ENCODE measurements at regions of chr12 and their contacts with region 1.

Region 1: GRCh38 chr12:113358381-113359132 is at the start of gene PLBD2:
- DNase-seq: peak; percentile 90
- ATAC-seq: peak; percentile 97
- H3K4me3 Mint-ChIP-seq: peak within 1 kb of the TSS; percentile 91
- H3K27ac Mint-ChIP-seq: peak within 1 kb of the TSS; percentile 88
- H3K4me1 Mint-ChIP-seq: peaks cover 11% of the 10 kb centered on the region
- H3K27me3 Mint-ChIP-seq: no peaks in the 10 kb centered on the region
- CTCF ChIP-seq: no peak
- total RNA-seq, gene PLBD2: 11.5 and 13.7 TPM in 2 replicates

Region 2: GRCh38 chr12:113184900-113185773 is 173.4 kb before region 1 on chr12 and contains the starts of genes DDX54 and RITA1:
- CTCF ChIA-PET with region 1: no interaction called
- POLR2A ChIA-PET with region 1: no interaction called
- intact Hi-C with region 1: loop called (anchors 1 kb)
- DNase-seq: peak; percentile 87
- ATAC-seq: peak; percentile 83
- H3K4me3 Mint-ChIP-seq: peak within 1 kb of the TSS; percentile 93
- H3K27ac Mint-ChIP-seq: peak within 1 kb of the TSS; percentile 94
- H3K4me1 Mint-ChIP-seq: peaks cover 39% of the 10 kb centered on the region
- H3K27me3 Mint-ChIP-seq: no peaks in the 10 kb centered on the region
- CTCF ChIP-seq: no peak
- total RNA-seq, gene DDX54: 115 TPM in 2 replicates
- total RNA-seq, gene RITA1: 15.5 and 18.2 TPM in 2 replicates

Region 3: DNA sequence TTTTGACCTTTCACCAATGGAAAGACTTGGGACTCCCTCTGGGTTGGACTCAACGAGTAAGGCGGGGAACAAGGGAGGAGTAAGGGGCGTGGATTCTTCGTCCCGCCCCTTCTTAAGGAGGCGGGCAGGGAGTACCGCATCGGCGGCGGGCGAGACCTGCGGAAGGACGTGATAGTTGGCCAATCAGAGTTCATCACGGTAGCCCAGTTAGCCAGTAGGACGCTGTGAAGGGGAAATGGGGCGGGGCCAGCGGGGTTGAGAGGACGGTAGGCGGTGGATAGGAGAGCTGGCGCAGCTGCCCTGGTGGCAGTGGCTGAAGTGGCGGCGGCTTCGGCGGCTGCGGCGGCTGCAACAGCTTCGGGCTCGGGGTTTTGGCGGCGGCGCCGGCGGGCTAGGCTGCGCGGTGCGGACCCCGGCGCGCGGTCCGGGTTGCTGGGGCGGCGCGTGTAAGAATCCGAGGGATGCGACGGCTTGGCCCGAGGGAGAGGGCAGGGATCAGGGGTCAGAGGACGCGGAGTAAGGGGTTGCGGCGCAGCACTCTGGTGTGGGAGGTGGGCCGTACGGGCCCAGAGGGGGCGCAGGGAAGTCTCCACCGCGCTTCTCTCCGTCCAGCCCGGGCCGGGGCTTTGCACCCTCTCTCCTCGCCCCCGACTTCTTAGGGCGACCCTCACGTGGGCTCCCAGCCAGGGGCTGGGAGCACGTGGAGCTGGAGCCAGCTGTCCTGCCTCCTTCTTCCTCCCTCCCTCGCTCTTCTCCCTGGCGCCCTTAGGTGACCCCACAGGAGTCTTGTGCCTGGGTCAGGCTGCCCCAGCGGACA is 137.2 kb before region 1 on chr12 and contains the start of gene TPCN1:
- CTCF ChIA-PET with region 1: no interaction called
- POLR2A ChIA-PET with region 1: no interaction called
- intact Hi-C with region 1: loop called (anchors 1 kb)
- DNase-seq: peak; percentile 95
- ATAC-seq: peak; percentile 91
- H3K4me3 Mint-ChIP-seq: peak within 1 kb of the TSS; percentile 94
- H3K27ac Mint-ChIP-seq: peak within 1 kb of the TSS; percentile 94
- H3K4me1 Mint-ChIP-seq: peaks cover 45% of the 10 kb centered on the region
- H3K27me3 Mint-ChIP-seq: no peaks in the 10 kb centered on the region
- CTCF ChIP-seq: no peak
- total RNA-seq, gene TPCN1: 107 and 126 TPM in 2 replicates

Region 4: DNA sequence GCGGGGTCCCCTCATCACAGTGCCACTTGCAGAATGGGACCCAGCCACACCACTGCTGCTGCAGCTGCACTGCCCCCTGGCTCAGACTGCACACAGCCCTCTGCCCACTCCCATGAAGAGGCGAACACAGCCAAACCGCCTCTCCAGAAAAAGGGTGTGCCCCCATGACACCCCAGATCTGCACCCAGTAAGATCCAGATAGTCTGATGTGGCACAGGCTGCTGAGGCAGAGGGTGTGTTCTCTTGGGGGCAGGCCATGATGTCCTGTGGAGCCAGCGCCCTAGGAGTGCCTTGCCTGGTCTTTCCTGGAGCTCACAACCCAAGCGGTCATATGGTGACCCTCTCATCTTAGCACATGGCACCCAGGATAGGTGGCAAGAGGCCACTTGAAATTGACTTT is 68.1 kb before region 1 on chr12:
- CTCF ChIA-PET with region 1: no interaction called
- POLR2A ChIA-PET with region 1: interaction called, 11 read pairs
- intact Hi-C with region 1: no loop called
- DNase-seq: no peak
- ATAC-seq: no peak
- H3K4me3 Mint-ChIP-seq: no peak overlapping the region
- H3K27ac Mint-ChIP-seq: no peak overlapping the region
- H3K4me1 Mint-ChIP-seq: no peaks in the 10 kb centered on the region
- H3K27me3 Mint-ChIP-seq: no peaks in the 10 kb centered on the region
- CTCF ChIP-seq: no peak

Region 5: DNA sequence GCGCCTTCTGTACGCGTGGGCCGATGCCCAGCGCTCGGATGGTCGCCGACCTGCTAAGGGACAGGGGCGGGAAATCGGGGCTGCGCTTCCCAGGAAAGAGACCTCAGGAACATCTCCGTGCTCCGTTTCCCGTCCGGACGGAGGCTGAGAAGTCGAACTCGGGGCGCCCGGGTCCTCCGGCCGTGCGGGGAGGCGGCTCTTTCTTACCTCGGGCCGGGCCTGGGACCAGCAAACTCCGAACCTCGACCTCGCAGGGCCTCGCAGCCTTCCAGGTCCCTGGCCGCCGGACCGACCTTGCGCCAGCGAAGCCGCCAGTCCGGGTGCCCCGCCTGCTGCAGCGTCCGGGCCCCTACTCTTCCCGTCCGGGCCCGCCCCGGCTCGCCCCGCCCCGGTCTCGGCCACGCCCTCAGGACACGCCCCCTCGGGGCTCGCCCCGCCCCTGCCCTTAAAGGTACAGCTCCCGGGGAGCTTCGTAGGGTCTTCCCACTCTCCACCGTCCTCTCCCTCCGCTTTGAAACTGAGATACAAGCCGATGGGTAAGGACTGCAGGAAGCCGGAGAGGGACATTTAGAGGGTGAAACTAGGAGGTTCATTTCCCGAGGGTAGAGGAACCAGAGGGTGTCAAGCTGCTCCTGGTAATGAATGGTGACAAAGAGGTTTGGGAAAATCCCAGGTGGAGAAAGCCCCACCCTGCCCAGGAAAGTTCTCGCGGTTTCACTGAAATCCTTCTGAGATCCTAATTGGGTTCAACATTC is 23.6 kb before region 1 on chr12 and contains the start of gene SLC8B1:
- CTCF ChIA-PET with region 1: no interaction called
- POLR2A ChIA-PET with region 1: interaction called, 13 read pairs
- intact Hi-C with region 1: loop called (anchors 1 kb)
- DNase-seq: peak; percentile 89
- ATAC-seq: peak; percentile 100
- H3K4me3 Mint-ChIP-seq: peak within 1 kb of the TSS; percentile 95
- H3K27ac Mint-ChIP-seq: peak within 1 kb of the TSS; percentile 71
- H3K4me1 Mint-ChIP-seq: peaks cover 35% of the 10 kb centered on the region
- H3K27me3 Mint-ChIP-seq: no peaks in the 10 kb centered on the region
- CTCF ChIP-seq: no peak
- total RNA-seq, gene SLC8B1: 14.3 and 22.4 TPM in 2 replicates

Region 6: GRCh38 chr12:113398346-113399290 is 40.1 kb after region 1 on chr12:
- CTCF ChIA-PET with region 1: no interaction called
- POLR2A ChIA-PET with region 1: no interaction called
- intact Hi-C with region 1: no loop called
- DNase-seq: no peak
- ATAC-seq: no peak
- H3K4me3 Mint-ChIP-seq: no peak overlapping the region
- H3K27ac Mint-ChIP-seq: no peak overlapping the region
- H3K4me1 Mint-ChIP-seq: no peaks in the 10 kb centered on the region
- H3K27me3 Mint-ChIP-seq: peaks cover 16% of the 10 kb centered on the region
- CTCF ChIP-seq: no peak

Region 7: GRCh38 chr12:113422030-113422885 is 63.7 kb after region 1 on chr12 and contains the start of gene SDSL:
- CTCF ChIA-PET with region 1: no interaction called
- POLR2A ChIA-PET with region 1: no interaction called
- intact Hi-C with region 1: loop called (anchors 2 kb)
- DNase-seq: peak; percentile 41
- ATAC-seq: peak; percentile 92
- H3K4me3 Mint-ChIP-seq: peak within 1 kb of the TSS; percentile 67
- H3K27ac Mint-ChIP-seq: peak within 1 kb of the TSS; percentile 68
- H3K4me1 Mint-ChIP-seq: peaks cover 25% of the 10 kb centered on the region
- H3K27me3 Mint-ChIP-seq: peaks cover 14% of the 10 kb centered on the region
- CTCF ChIP-seq: no peak
- total RNA-seq, gene SDSL: 0.20 and 1.2 TPM in 2 replicates

Region 8: GRCh38 chr12:113515082-113515856 is 156.7 kb after region 1 on chr12:
- CTCF ChIA-PET with region 1: no interaction called
- POLR2A ChIA-PET with region 1: no interaction called
- intact Hi-C with region 1: no loop called
- DNase-seq: no peak
- ATAC-seq: no peak
- H3K4me3 Mint-ChIP-seq: no peak overlapping the region
- H3K27ac Mint-ChIP-seq: no peak overlapping the region
- H3K4me1 Mint-ChIP-seq: no peaks in the 10 kb centered on the region
- H3K27me3 Mint-ChIP-seq: peaks cover 58% of the 10 kb centered on the region
- CTCF ChIP-seq: no peak

Region 9: DNA sequence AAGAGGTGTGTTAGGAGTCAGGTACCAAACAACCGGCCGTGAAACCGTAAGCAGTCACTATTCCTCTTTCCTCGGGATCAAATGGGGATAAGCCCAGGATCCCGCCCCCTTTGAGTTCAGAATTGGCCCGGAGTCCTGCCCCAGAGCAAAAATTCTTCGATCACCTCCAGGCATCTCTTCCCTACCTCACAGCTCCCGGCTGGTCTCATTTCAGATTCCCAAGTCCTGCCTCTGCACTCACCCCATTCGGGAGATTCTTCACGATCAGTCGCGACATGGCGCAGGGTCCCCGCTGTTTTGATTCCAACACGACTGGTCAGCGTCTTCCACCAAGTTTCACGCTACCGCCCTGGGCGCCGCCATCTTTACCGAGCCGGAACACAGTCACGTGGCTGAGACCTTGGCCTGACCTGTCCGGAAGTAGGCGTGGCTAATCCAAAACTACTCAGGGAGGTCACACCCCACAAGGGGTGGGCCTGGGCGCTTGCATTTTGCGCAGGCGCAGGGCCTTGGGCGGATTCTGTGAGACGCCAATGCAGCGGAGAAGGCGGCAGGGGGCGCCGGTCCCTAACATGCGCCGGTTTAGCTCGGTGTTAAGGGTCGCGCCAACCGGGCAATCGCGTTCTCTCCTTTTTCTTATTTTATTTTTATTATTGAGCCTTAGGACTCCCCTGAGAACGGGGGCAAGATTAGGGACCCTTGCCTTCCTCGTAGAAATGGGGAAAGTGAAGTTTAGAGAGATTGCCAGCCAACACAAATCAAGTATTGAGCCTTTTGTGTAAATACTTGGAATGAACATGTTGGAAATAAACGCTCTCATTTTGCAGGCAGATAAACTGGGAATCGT is 607.6 kb after region 1 on chr12 and contains the start of gene RBM19:
- CTCF ChIA-PET with region 1: no interaction called
- POLR2A ChIA-PET with region 1: no interaction called
- intact Hi-C with region 1: loop called (anchors 1 kb)
- DNase-seq: peak; percentile 90
- ATAC-seq: peak; percentile 98
- H3K4me3 Mint-ChIP-seq: peak within 1 kb of the TSS; percentile 100
- H3K27ac Mint-ChIP-seq: peak within 1 kb of the TSS; percentile 95
- H3K4me1 Mint-ChIP-seq: peaks cover 44% of the 10 kb centered on the region
- H3K27me3 Mint-ChIP-seq: peaks cover 6% of the 10 kb centered on the region
- CTCF ChIP-seq: peak; percentile 54
- total RNA-seq, gene RBM19: 77.0 and 79.9 TPM in 2 replicates

Measured in activated B cell treated with CpG ODN at 0.5 μM for 24 hours (primary cell).